PC-9 (cell line): ENCODE measurements at regions of chr14 and their contacts with region 1.

Region 1: DNA sequence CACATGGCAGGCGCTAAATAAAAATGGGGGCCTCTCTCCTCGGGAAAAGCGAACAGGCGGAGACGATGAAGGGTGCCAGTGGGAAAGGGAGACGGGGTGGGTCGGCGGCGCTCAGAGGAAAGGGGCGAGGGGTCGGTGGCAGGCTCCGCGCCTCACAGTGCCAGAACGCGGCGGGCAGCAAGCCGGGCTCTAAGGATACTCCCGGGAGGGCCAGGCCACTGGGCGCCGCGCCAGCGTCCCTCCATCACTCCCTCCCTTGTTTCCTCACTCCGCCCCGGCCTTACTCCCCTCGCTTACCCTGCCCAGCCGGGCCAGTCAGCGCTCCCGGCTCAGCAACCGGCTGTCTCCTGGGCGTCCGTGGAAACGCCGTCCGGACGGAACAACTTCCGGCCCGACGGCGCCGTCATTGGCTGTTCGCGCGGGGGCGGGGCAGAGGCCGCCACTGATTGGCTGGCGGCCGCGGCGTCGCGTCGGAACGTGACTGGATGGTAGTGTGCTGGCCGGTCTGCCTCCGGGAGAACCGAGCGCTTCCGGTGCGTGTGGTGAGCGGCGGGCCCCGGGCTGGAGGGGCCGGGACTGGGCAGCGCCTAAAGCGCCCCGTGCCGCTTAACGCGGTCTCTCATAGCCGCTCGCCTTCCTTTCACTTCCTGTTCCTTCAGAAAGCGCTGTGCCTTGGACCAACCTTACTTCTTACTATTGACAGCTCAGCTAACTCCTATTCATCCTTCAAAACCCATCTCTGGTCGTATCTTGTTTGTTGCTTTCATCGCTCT is 53.0 kb downstream of the SLC25A47 start:
- DNase-seq: peak; percentile 77 to 80
- H3K4me3 ChIP-seq: peak within 1 kb of the TSS; percentile 94
- H3K27ac ChIP-seq: peak within 1 kb of the TSS; percentile 97
- H3K4me1 ChIP-seq: peaks cover 20% of the 10 kb centered on the region
- H3K27me3 ChIP-seq: no peaks in the 10 kb centered on the region
- CTCF ChIP-seq: no peak

Region 2: DNA sequence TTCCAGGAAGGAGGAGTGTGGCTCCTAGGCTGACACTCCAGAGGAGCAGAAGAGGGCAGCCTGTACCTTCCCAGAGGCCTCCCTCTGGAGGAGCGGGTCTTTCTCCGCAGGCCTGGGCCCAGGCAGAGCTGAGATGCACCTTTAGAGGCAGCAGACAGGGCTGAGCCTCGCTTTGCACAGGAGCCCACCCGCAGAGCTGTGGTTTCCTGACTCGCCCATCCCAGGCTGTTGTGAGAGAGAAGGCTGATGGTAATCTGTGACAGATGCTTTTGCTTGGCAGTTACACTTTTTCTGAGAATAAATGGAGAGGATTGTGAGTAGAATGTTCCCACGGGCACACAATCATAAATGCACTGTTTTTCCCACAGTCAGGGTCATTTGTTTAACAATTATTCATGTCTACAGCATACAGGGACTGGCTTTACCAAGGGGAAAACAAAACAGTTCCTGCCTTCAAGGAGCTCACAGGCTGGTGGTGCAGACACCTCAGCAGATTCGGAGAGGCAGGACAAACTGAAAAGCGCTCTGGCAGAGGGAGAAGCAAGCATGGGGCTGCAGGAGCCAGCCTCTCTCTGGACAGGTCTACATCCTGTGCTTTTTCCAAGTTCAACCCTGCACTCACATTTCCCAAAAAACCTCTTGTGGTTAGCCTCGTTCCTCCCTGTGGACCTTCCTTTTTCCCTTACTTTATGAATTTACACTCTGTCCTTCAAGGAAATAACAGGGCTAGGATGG is 297.0 kb before region 1 on chr14:
- CTCF ChIA-PET with region 1: no interaction called
- POLR2A ChIA-PET with region 1: no interaction called
- intact Hi-C with region 1: loop called (anchors 10 kb)
- DNase-seq: no peak
- H3K4me3 ChIP-seq: no peak overlapping the region
- H3K27ac ChIP-seq: no peak overlapping the region
- H3K4me1 ChIP-seq: no peaks in the 10 kb centered on the region; the same call in none of the 2 replicates
- H3K27me3 ChIP-seq: no peaks in the 10 kb centered on the region
- CTCF ChIP-seq: no peak

Region 3: GRCh38 chr14:100192672-100193416 is 183.3 kb before region 1 on chr14:
- CTCF ChIA-PET with region 1: no interaction called
- POLR2A ChIA-PET with region 1: no interaction called
- intact Hi-C with region 1: loop called (anchors 2 kb)
- DNase-seq: peak; percentile 91
- H3K4me3 ChIP-seq: peak overlapping the region; percentile 46; the same call in 1 of the 2 replicates
- H3K27ac ChIP-seq: peak overlapping the region; percentile 51; the same call in 1 of the 2 replicates
- H3K4me1 ChIP-seq: peaks cover 13% of the 10 kb centered on the region; the same call in 1 of the 2 replicates
- H3K27me3 ChIP-seq: no peaks in the 10 kb centered on the region
- CTCF ChIP-seq: peak; percentile 71

Region 4: DNA sequence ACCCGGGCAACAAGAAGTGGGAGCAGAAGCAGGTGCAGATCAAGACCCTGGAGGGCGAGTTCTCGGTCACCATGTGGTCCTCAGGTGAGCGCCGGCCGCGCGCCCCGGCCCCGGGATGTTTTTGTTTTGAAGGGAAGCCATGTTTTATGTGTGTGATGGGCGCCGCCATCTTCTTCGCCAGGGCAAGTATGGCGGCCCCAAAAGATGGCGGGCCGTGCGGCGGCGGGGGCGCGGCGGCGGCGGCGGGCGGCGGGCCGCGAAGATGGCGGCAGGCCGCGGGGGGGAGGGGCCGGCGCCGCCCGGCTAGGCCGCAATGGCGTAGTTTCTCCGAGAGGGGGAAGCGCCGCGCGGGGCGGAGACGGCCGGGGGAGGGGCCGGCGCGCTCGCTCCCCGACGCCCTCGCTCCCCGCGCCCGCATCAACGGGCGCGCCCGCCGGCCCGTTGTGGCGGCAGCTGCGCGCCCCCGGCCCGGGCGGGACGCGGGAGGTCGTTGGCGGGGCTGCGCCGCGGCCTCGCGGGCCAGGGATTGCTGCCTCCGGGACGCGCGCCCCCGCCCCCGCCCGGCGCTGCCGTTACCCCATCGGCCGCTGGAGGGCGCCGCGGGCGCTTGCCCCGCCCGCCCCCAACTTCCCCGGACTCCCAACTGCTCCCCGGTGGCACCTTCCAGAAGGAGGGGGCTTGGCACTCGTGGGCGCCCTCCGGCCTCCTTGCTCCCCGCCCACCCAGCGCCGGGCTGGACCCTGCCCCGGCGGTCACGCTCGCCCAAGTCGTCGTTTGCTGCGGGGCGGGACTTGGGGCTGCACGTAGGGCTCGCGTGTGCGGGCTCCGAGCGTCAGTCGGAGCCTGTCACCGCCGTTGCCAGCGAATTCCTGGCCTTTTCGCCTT is 136.1 kb before region 1 on chr14:
- CTCF ChIA-PET with region 1: no interaction called
- POLR2A ChIA-PET with region 1: no interaction called
- intact Hi-C with region 1: loop called (anchors 10 kb)
- DNase-seq: peak; percentile 62 to 68
- H3K4me3 ChIP-seq: peak overlapping the region; percentile 85
- H3K27ac ChIP-seq: peak overlapping the region; percentile 67
- H3K4me1 ChIP-seq: peaks cover 20% of the 10 kb centered on the region
- H3K27me3 ChIP-seq: no peaks in the 10 kb centered on the region
- CTCF ChIP-seq: peak; percentile 64

Region 5: DNA sequence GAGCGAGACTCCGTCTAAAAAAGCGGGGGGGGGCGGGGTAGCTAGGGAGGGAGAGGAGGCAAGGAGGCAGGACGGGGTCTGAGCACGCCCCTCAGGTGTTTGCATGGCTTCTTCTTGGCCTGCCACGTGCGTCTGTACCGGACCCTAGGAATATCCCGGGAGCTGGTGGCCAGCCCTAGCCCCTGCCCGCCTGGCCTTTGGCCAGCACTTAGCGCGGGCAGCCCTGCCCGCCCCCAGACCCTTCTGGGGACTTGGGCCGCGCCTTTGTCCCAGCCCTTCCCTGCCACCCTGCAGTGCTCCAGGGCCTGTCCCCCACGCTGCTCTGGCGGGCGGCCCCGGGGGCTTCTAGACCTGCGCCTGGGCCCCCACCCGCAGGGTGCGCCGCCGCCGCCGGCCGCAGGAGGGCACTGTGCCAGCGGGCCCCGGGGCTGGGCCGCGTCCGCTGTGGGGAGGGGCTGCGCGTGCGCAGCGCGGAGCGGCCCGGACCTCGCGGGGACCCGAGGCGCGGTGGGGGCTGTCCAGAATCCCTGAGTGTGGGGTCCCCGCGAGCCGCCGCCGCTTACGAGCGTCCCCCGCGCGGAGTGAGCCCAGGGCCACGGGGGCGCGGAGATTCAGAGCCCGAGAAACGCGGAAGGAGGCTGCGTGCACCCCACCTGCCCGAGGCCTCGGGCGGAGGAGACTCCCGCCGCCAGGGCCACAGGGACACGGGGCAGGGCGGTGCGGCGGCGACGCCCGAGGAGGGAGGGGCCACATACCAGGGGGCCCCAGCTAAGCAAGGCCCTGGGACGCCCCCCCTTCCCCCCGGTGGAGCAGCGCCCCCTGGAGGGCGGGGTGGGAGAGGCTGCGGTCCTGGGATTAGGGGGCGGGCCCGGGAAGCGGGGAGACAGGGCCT is 90.9 kb before region 1 on chr14:
- CTCF ChIA-PET with region 1: interaction called, 3 read pairs
- POLR2A ChIA-PET with region 1: no interaction called
- intact Hi-C with region 1: loop called (anchors 5 kb)
- DNase-seq: peak in 1 of 2 experiments; percentile 51
- H3K4me3 ChIP-seq: peak overlapping the region; percentile 63; the same call in 1 of the 2 replicates
- H3K27ac ChIP-seq: no peak overlapping the region
- H3K4me1 ChIP-seq: no peaks in the 10 kb centered on the region
- H3K27me3 ChIP-seq: no peaks in the 10 kb centered on the region
- CTCF ChIP-seq: peak; percentile 82

Region 6: DNA sequence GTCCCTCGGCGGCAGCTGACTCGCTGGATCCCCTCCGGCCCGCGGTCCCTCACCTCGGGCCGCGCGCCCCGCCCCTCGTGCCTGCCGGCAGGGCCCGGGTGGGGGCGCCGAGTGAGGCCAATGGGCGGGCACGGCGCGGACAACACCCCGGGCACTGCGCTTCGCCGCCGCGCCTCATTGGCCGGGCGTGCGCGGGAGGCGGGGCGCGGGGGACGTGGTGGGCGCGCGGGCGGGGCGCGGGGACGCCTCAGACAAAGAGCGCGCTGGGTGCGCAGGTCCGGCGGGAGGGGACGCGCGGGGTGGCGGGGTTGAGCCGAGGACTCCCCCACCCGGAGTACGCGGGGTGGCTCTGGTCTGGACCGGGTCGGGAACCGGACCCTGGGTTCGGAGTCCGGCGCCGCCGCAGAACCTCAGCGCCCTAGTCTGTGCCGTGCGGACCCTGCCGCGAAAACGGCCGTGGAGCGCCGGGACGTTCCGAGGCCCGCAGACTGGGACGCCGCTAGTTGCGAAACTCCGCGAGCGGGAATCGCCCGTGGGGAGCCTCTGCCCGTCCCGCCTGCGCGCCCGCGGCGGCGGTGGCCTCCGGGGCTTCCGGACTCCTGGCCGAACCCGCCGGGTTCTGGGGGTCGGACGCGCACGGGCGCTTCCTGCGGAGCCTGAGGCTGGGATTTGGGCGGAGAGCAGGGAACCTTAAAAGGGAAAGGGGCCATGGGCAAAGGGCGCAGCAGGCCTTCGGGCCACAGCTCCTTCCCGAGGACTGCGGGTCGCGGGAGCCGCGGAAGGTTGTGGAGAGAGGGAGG is 69.5 kb before region 1 on chr14 and contains the start of gene SLC25A29:
- CTCF ChIA-PET with region 1: no interaction called
- POLR2A ChIA-PET with region 1: no interaction called
- intact Hi-C with region 1: loop called (anchors 5 kb)
- DNase-seq: peak in 1 of 2 experiments; percentile 52
- H3K4me3 ChIP-seq: peak within 1 kb of the TSS; percentile 52; the same call in 1 of the 2 replicates
- H3K27ac ChIP-seq: no peak within 1 kb of the TSS
- H3K4me1 ChIP-seq: peaks cover 5% of the 10 kb centered on the region; the same call in 1 of the 2 replicates
- H3K27me3 ChIP-seq: no peaks in the 10 kb centered on the region
- CTCF ChIP-seq: no peak
- total RNA-seq, gene SLC25A29: 6.9 and 11.8 TPM in 2 replicates

Region 7: DNA sequence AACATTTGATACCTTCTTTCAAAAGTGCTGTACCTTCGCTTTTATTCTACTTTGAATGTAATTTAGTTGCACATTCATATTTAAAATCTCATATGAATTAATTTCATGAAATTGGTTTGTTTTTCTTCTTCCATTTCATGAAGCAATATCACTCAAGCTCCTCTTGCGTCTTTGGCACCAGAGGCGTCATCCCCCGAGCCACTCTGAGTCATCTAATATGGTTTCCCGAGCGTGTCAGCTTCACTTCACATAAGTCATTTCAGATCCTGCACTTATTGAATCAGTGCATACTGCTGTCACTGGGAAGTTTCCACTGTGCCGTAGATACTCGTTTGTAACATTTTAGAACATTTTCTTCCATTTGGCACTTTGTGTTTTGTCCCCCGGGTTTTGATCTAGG is 52.6 kb after region 1 on chr14:
- CTCF ChIA-PET with region 1: no interaction called
- POLR2A ChIA-PET with region 1: no interaction called
- intact Hi-C with region 1: no loop called
- DNase-seq: no peak
- H3K4me3 ChIP-seq: no peak overlapping the region
- H3K27ac ChIP-seq: no peak overlapping the region
- H3K4me1 ChIP-seq: peaks cover 17% of the 10 kb centered on the region
- H3K27me3 ChIP-seq: no peaks in the 10 kb centered on the region
- CTCF ChIP-seq: no peak

Region 8: GRCh38 chr14:101019990-101020710 is 644.0 kb after region 1 on chr14:
- CTCF ChIA-PET with region 1: no interaction called
- POLR2A ChIA-PET with region 1: no interaction called
- intact Hi-C with region 1: no loop called
- DNase-seq: no peak
- H3K4me3 ChIP-seq: no peak overlapping the region
- H3K27ac ChIP-seq: no peak overlapping the region
- H3K4me1 ChIP-seq: no peaks in the 10 kb centered on the region
- H3K27me3 ChIP-seq: peaks cover 33% of the 10 kb centered on the region
- CTCF ChIP-seq: no peak